ENCODE measurements at regions of chr9 and their contacts with region 1.

Region 1: DNA sequence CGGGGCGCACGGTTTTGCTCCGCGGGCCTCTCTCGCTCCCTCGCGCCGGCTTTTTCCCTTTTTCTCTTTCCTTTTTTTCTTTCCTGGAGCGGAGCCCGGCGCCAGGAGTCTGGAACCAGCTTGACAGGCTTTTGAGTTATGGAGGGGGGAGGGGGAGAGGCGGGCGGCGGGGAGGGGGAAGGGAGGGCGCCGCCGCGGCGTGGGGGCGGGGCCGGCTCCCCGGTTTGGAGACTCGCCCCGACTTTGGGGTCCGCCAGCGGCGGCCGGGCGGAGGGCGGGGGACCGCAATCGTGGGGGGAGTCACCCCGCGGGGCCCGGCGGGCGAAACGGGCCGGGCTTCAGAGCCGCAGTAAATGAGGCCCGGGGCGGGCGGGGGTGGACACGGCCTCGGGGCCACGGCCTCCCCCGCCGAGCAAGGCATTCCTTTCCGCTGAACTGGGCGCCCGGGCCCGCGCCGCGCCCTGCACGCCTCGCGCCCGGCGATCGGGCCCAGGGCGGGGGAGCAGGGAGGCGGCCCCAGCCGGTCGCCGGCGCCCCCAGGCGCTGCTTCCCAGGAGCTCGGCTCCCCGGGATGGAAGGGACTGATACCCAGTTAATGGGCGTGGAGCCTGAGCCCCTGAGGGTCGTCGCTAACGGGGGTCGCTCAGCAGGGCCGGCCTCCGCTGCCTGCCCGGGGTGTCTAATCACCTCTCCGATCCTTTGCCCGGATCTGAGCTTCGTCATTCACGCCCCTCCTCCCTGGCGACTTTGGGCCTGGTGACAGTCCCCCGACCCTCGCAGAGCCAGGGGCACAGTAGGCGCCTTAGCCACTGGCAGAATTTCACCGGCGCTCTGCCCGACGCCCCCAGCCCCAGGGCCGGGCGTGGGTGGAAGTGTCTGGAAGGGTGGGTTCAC is 138.1 kb downstream of the C9orf50 start:
- DNase-seq: peak; percentile 89 to 92
- ATAC-seq: peak; percentile 72 to 79 (median 76)
- H3K4me3 ChIP-seq: peak overlapping the region; percentile 74
- H3K27ac ChIP-seq: peak overlapping the region; percentile 100
- H3K4me1 ChIP-seq: peaks cover 30% of the 10 kb centered on the region
- H3K27me3 ChIP-seq: no peaks in the 10 kb centered on the region
- CTCF ChIP-seq: no peak

Region 2: DNA sequence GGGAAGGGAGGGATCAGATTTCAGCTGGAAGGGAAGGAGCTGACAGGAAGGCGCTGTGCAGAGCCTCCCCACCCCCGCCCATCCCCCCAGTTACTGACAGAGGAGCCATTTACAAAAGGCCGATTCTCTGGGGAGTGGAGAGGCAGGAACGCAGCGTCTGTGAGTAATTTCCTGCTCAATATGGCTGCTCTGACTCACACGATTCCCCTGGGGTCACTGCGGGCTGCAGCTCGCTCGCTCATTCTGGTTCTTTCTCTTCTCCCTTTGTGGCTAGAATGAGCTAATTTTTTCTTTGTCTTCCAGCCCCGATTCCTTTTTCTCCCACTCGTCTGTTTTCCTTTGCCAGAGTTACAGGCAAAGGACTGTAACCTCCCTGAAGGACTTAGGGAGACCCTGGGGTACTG is 342.8 kb before region 1 on chr9:
- intact Hi-C with region 1: no loop called
- DNase-seq: peak; percentile 95
- ATAC-seq: peak; percentile 83 to 85 (median 85)
- H3K4me3 ChIP-seq: peak overlapping the region; percentile 67
- H3K27ac ChIP-seq: peak overlapping the region; percentile 98
- H3K4me1 ChIP-seq: peaks cover 58% of the 10 kb centered on the region
- H3K27me3 ChIP-seq: no peaks in the 10 kb centered on the region
- CTCF ChIP-seq: no peak

Region 3: GRCh38 chr9:129413537-129414376 is 69.0 kb before region 1 on chr9:
- intact Hi-C with region 1: loop called (anchors 5 kb)
- DNase-seq: peak; percentile 99 to 100
- ATAC-seq: peak; percentile 92 to 94 (median 93)
- H3K4me3 ChIP-seq: peak overlapping the region; percentile 80
- H3K27ac ChIP-seq: peak overlapping the region; percentile 99
- H3K4me1 ChIP-seq: peaks cover 26% of the 10 kb centered on the region
- H3K27me3 ChIP-seq: no peaks in the 10 kb centered on the region
- CTCF ChIP-seq: no peak

Region 4: GRCh38 chr9:129524582-129525270 is 42.0 kb after region 1 on chr9:
- intact Hi-C with region 1: no loop called
- DNase-seq: no peak
- ATAC-seq: no peak
- H3K4me3 ChIP-seq: no peak overlapping the region
- H3K27ac ChIP-seq: no peak overlapping the region
- H3K4me1 ChIP-seq: no peaks in the 10 kb centered on the region
- H3K27me3 ChIP-seq: no peaks in the 10 kb centered on the region
- CTCF ChIP-seq: no peak